ENCODE measurements at regions of chr9 and their contacts with region 1.

Region 1: DNA sequence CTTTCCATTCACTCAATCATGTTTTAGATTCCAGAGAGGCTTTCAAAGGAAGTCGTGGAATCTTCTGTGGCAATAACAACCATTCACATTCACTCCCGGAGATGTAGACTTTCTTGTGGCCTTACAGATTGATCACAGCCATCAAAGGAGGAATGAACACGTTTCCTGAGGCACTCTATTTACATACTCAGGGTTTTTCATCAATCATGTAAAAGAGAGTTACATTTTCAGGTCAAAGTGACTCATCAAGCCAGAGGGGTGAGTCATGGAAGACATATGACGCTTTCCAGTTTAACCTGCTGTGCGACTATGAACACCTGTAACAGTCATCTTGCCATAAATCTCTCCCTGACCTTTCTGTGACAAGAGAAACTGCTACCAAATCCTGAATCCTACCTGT is 39.3 kb upstream of the RAD23B start:
- DNase-seq: peak; percentile 69
- H3K4me3 Mint-ChIP-seq: peak overlapping the region; percentile 38
- H3K27ac Mint-ChIP-seq: peak overlapping the region; percentile 79
- H3K4me1 Mint-ChIP-seq: peaks cover 26% of the 10 kb centered on the region
- H3K27me3 Mint-ChIP-seq: peaks cover 1% of the 10 kb centered on the region

Region 2: GRCh38 chr9:107213561-107214028 is 30.2 kb before region 1 on chr9:
- CTCF ChIA-PET with region 1: no interaction called
- POLR2A ChIA-PET with region 1: no interaction called
- intact Hi-C with region 1: loop called (anchors 1 kb)
- DNase-seq: peak; percentile 31
- H3K4me3 Mint-ChIP-seq: no peak overlapping the region
- H3K27ac Mint-ChIP-seq: no peak overlapping the region
- H3K4me1 Mint-ChIP-seq: peaks cover 12% of the 10 kb centered on the region
- H3K27me3 Mint-ChIP-seq: peaks cover 5% of the 10 kb centered on the region

Region 3: DNA sequence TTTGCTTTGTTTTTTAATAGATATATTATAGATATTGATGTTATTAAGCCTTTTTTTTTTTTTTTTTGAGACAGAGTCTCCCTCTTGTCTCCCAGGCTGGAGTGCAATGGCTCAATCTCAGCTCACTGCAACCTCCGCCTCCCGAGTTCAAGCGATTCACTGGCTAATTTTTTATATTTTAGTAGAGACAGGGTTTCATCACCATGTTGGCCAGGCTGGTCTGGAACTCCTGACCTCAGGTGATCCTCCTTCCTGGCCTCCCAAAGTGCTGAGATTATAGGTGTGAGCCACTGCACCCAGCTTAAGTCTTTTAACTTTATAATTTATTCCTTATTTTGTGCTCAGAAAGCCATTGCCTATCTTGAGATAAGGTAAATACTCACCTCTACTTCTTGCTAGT is 15.2 kb after region 1 on chr9:
- CTCF ChIA-PET with region 1: no interaction called
- POLR2A ChIA-PET with region 1: no interaction called
- intact Hi-C with region 1: no loop called
- DNase-seq: no peak
- H3K4me3 Mint-ChIP-seq: no peak overlapping the region
- H3K27ac Mint-ChIP-seq: no peak overlapping the region
- H3K4me1 Mint-ChIP-seq: no peaks in the 10 kb centered on the region
- H3K27me3 Mint-ChIP-seq: peaks cover 8% of the 10 kb centered on the region

Region 4: GRCh38 chr9:107489687-107490605 is 246.2 kb after region 1 on chr9 and contains the start of gene KLF4:
- CTCF ChIA-PET with region 1: no interaction called
- POLR2A ChIA-PET with region 1: no interaction called
- intact Hi-C with region 1: loop called (anchors 5 kb)
- DNase-seq: peak; percentile 84
- H3K4me3 Mint-ChIP-seq: peak within 1 kb of the TSS; percentile 51
- H3K27ac Mint-ChIP-seq: no peak within 1 kb of the TSS
- H3K4me1 Mint-ChIP-seq: peaks cover 17% of the 10 kb centered on the region
- H3K27me3 Mint-ChIP-seq: peaks cover 62% of the 10 kb centered on the region
- total RNA-seq, gene KLF4: 0.75 to 1.3 TPM

Measured in activated CD4-positive, alpha-beta memory T cell treated with anti-CD3 and anti-CD28 coated beads for 36 hours (primary cell).